Activated CD8-positive, alpha-beta T cell treated with anti-CD3 and anti-CD28 coated beads for 36 hours (primary cell): ENCODE measurements at regions of chr5 and their contacts with region 1.

Region 1: GRCh38 chr5:137735555-137736284 is at the start of gene KLHL3:
- DNase-seq: peak; percentile 62
- ATAC-seq: peak; percentile 40
- H3K4me3 Mint-ChIP-seq: no peak within 1 kb of the TSS
- H3K27ac Mint-ChIP-seq: no peak within 1 kb of the TSS
- H3K4me1 Mint-ChIP-seq: peaks cover 48% of the 10 kb centered on the region
- H3K27me3 Mint-ChIP-seq: no peaks in the 10 kb centered on the region
- CTCF ChIP-seq: no peak
- total RNA-seq, gene KLHL3: 9.2 to 12.2 TPM

Region 2: GRCh38 chr5:137629646-137630045 is 106.1 kb before region 1 on chr5:
- CTCF ChIA-PET with region 1: interaction called, 110 read pairs
- POLR2A ChIA-PET with region 1: interaction called, 3 read pairs
- intact Hi-C with region 1: no loop called
- DNase-seq: peak; percentile 8
- ATAC-seq: peak; percentile 82
- H3K4me3 Mint-ChIP-seq: no peak overlapping the region
- H3K27ac Mint-ChIP-seq: no peak overlapping the region
- H3K4me1 Mint-ChIP-seq: no peaks in the 10 kb centered on the region
- H3K27me3 Mint-ChIP-seq: no peaks in the 10 kb centered on the region
- CTCF ChIP-seq: peak; percentile 94

Region 3: GRCh38 chr5:137695651-137696428 is 39.9 kb before region 1 on chr5:
- CTCF ChIA-PET with region 1: interaction called, 38 read pairs
- POLR2A ChIA-PET with region 1: interaction called, 15 read pairs
- intact Hi-C with region 1: loop called (anchors 5 kb)
- DNase-seq: peak; percentile 15
- ATAC-seq: peak; percentile 53
- H3K4me3 Mint-ChIP-seq: peak overlapping the region; percentile 39
- H3K27ac Mint-ChIP-seq: peak overlapping the region; percentile 92
- H3K4me1 Mint-ChIP-seq: peaks cover 40% of the 10 kb centered on the region
- H3K27me3 Mint-ChIP-seq: no peaks in the 10 kb centered on the region
- CTCF ChIP-seq: peak; percentile 26

Region 4: DNA sequence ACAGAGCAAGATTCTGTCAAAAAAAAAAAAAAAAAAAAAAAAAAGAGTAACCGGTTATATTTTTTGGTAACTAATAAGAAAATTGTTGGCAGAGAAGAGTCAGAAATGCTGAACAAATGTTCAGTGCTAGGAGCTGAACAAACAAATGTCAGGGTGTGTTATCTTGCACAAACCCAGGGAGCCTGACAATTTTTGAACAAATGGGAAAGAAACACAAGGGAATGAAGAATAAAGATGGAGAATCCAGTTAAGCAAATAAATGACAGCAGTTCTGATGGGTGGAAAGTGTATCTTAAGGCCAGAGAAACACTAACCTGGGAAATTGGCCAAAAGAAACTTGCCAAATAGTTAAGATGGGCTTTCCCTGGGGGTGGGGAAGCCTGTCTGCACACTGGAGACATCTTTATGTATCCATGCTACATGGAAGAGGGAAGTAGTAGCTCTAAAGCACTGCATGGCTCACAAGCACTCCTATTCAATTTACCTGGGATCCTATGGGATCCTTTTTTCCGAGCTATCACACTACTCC is 23.5 kb before region 1 on chr5:
- CTCF ChIA-PET with region 1: interaction called, 3 read pairs
- POLR2A ChIA-PET with region 1: interaction called, 10 read pairs
- intact Hi-C with region 1: no loop called
- DNase-seq: no peak
- ATAC-seq: no peak
- H3K4me3 Mint-ChIP-seq: no peak overlapping the region
- H3K27ac Mint-ChIP-seq: no peak overlapping the region
- H3K4me1 Mint-ChIP-seq: peaks cover 2% of the 10 kb centered on the region
- H3K27me3 Mint-ChIP-seq: no peaks in the 10 kb centered on the region
- CTCF ChIP-seq: no peak

Region 5: DNA sequence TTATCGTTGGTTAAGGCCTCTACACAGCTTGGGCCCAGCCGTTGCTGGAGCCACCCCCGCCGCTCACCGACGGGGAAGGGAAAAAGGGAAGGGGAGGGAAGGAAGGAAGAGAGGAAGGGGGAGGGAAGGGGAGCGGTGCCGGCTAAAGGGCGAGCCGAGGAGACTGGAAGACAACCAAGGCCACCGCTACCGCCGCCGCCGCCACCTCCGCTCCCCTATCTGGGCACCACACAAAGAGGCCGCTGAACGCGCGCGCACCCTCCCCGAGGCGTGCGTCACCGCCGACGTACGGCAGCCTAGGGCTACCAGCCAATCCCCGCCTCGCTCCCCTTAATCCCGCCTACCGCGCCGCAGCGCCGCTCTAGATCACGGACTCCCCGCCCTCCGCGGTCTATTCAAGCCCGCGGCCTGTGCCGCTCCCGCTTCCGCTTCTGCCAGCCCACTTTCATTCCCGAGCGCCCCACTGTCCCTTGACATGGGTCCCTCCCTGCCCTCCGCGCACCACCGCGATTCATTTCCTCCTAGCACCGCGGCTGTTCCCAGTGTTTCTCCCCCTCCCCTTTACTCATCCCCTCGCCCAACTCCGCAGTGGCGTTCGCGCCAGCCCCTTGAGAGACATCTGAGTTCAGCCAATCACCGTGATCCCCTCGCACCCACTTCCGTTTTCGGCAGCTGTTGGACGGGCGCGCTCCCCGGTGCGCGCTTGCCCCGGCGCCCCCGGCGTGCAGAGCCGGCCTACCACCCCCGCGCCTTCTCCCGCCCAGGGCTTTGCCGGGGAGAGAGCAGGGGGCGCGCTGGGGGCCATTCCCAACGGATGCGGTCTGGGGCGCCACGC is 18.6 kb after region 1 on chr5 and contains the start of gene HNRNPA0:
- CTCF ChIA-PET with region 1: interaction called, 44 read pairs
- POLR2A ChIA-PET with region 1: interaction called, 43 read pairs
- intact Hi-C with region 1: loop called (anchors 2 kb)
- DNase-seq: peak; percentile 97
- ATAC-seq: peak; percentile 88
- H3K4me3 Mint-ChIP-seq: peak within 1 kb of the TSS; percentile 88
- H3K27ac Mint-ChIP-seq: peak within 1 kb of the TSS; percentile 99
- H3K4me1 Mint-ChIP-seq: peaks cover 23% of the 10 kb centered on the region
- H3K27me3 Mint-ChIP-seq: no peaks in the 10 kb centered on the region
- CTCF ChIP-seq: no peak
- total RNA-seq, gene HNRNPA0: 32.8 to 33.1 TPM